ENCODE measurements at regions of chr4 and their contacts with region 1.

Region 1: DNA sequence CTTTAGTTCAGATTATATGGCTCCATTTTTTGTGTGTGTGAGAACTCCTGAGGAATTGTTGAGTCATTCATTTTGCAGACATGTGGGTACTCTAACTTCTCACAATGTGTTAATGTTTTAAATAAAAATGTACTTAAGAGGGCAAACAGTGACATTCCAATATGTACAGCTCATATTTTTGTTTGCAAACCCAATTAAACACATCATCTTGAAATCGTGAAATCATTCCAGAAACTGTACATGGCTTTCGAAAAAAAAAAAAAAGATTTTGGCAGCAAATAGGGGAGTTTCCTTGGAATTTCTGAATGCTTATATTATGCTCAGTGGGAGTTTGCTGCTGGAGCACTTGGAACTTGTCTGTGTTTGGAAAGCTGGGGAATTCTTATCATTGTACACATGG is 85.0 kb downstream of the HPGD start:
- DNase-seq: no peak
- H3K4me3 ChIP-seq: no peak overlapping the region
- H3K27ac ChIP-seq: peak overlapping the region in 1 of 4 donors; percentile 10
- H3K4me1 ChIP-seq: peaks cover 0 to 10% (median 10%) of the 10 kb centered on the region in 4 donors
- H3K27me3 ChIP-seq: no peaks in the 10 kb centered on the region
- CTCF ChIP-seq: no peak
- EP300 ChIP-seq: no peak
- POLR2A ChIP-seq: no peak

Region 2: DNA sequence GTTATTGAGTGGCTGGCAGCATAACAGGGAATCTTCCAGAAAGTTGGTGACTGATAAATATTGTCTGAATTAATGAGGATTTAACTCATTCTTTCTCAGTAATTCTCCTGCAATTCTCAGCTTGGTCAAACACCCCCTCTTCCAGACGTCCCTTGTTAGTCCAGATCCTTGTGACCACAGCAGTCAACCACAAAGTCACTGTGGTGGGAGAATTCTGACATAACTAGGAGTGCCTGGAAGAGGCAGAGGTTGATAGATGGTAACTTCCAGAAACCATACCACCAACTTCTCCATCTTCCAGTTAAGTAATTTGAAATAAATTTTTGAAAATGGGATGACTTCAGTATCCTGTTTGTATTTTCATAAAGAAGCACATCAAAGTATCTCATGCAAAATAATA is 63.5 kb before region 1 on chr4:
- intact Hi-C with region 1: loop called (anchors 5 kb)
- DNase-seq: no peak
- H3K4me3 ChIP-seq: no peak overlapping the region
- H3K27ac ChIP-seq: no peak overlapping the region
- H3K4me1 ChIP-seq: no peaks in the 10 kb centered on the region
- H3K27me3 ChIP-seq: no peaks in the 10 kb centered on the region
- CTCF ChIP-seq: no peak
- EP300 ChIP-seq: no peak
- POLR2A ChIP-seq: no peak

Region 3: GRCh38 chr4:174467107-174467506 is 29.8 kb after region 1 on chr4:
- intact Hi-C with region 1: no loop called
- DNase-seq: no peak
- H3K4me3 ChIP-seq: no peak overlapping the region
- H3K27ac ChIP-seq: no peak overlapping the region
- H3K4me1 ChIP-seq: peaks cover 0 to 2% (median under 1%) of the 10 kb centered on the region in 4 donors
- H3K27me3 ChIP-seq: no peaks in the 10 kb centered on the region
- CTCF ChIP-seq: no peak
- EP300 ChIP-seq: no peak
- POLR2A ChIP-seq: no peak